GM13977 (cell line): ENCODE measurements at regions of chr6 and their contacts with region 1.

Region 1: GRCh38 chr6:163460307-163460782 is 45.8 kb downstream of the QKI start:
- DNase-seq: peak; percentile 29
- CTCF ChIP-seq: no peak

Region 2: GRCh38 chr6:163711615-163712565 is 251.5 kb after region 1 on chr6:
- in situ Hi-C with region 1: loop called (anchors 25 kb)
- DNase-seq: peak; percentile 31
- CTCF ChIP-seq: peak; percentile 5